Right ventricle myocardium superior (tissue), 1 donor: ENCODE measurements at regions of chr17 and their contacts with region 1.

Region 1: DNA sequence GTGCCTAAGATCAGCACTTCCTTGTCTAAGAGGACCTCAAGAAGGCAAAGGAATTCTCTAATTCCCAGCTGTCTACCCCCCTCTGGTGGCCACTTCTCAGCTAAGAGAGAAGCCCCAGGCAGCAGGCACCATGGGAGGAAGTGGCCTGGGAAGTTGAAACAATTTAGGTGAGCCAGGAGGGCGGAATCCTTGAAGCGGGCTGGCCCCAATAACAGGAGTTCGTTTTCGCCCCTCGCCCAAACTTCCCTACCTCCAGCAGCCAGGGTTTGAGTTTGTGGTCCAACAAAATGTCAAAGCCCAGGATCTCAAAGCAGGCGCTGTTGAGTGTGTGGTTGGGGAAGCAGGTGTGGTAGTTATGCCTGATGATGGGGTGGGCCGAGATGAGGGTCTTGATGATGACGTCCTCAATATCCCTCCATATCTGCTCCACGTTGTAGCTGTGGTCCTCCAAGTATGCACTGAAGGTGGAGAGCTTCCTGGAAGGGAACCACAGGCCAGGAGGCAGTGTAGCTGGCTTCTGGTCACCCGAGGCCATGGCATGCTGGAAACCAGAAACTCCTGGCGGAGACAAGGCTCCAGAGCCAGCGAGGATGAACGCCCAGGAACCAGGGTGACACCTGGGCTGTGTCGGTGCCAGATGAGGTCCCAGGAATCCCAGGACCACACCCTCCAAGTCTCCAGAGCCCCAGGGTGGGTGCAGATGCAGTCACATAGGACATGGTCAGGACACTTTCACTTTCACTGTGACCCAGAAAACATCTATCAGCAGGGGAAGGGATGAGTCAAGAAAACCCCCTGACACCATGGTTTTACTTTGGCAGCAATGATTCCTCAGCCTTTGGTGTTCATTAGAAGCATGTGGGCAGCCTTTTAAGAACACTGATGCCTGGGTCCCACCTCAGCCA is 25.6 kb downstream of the TTLL6 start:
- DNase-seq: peak; percentile 67
- ATAC-seq: peak; percentile 87

Region 2: DNA sequence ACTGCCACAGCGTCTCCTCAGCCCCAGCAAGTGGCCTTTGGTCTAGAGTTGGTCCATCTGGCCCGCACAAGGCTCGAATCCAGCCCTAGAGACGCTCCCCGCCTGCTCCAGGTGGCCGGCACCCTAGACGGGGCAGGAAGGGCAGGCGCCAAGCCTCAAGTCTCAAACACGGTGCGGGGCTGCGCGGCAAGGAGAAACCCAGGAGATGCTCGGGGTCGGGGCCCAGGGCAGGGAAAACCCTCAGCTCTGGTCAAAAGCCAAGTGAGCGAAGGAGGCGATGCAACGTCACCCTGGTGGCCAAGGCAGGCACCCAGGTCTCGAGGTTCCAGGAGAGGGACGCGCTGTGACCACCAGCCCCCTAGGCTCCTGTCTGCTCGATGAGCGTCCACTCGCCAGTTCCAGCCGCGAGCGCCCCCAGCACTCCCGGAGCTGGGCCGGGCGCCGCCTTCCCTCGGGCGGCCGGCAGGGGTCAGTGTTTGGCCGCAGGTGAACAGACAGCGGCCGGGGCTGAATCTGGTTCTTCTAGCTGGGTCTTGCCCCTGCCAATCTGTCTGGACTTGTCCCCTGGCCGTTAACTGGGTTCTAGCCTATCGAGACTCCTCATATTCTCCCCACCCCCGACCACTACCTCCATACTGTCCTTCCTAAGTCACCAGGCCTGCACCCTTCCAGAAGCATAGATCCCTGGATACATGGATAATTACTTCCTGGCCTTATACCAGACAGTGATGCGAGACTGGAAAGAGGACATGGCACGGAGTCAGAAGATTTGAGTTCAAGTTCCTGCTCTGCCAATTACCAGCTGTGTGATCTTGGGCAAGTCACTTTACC is 113.0 kb before region 1 on chr17:
- intact Hi-C with region 1: loop called (anchors 5 kb)
- DNase-seq: peak; percentile 68
- ATAC-seq: peak; percentile 82

Region 3: GRCh38 chr17:48724251-48725003 is 67.0 kb before region 1 on chr17:
- intact Hi-C with region 1: loop called (anchors 5 kb)
- DNase-seq: peak; percentile 89
- ATAC-seq: peak; percentile 86